Activated naive CD4-positive, alpha-beta T cell treated with anti-CD3 and anti-CD28 coated beads, Interleukin-2, amount 10 ng/mL, durations not matched to agents 7 days and 5 days (primary cell): ENCODE measurements at regions of chr2 and their contacts with region 1.

Region 1: GRCh38 chr2:196220671-196221070 is 49.3 kb upstream of the STK17B start:
- DNase-seq: no peak
- H3K4me3 Mint-ChIP-seq: no peak overlapping the region
- H3K27ac Mint-ChIP-seq: no peak overlapping the region
- H3K4me1 Mint-ChIP-seq: peaks cover 51% of the 10 kb centered on the region
- H3K27me3 Mint-ChIP-seq: no peaks in the 10 kb centered on the region

Region 2: GRCh38 chr2:196233021-196233804 is 12.5 kb after region 1 on chr2:
- CTCF ChIA-PET with region 1: interaction called, 30 read pairs
- DNase-seq: no peak
- H3K4me3 Mint-ChIP-seq: no peak overlapping the region
- H3K27ac Mint-ChIP-seq: peak overlapping the region; percentile 91
- H3K4me1 Mint-ChIP-seq: peaks cover 93% of the 10 kb centered on the region
- H3K27me3 Mint-ChIP-seq: no peaks in the 10 kb centered on the region

Region 3: DNA sequence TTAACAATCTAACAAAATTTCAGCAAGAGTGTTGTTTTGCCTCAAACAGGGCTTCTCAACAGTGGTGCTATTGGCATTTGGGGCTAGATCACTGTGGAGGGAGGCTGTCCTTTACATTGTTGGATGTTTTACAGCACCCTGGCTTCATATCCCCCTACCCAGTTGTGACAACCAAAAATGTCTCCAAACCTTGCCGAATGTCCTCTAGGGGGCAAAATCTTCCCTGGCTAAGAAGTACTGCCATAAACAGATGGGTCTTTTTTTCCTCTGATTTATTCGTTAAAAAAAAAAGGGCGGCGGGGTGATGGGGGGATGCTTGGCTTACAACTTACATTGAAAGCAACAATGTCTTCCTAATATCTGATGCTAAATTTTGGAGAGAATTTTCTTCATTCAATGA is 211.3 kb after region 1 on chr2:
- CTCF ChIA-PET with region 1: no interaction called
- DNase-seq: no peak
- H3K4me3 Mint-ChIP-seq: no peak overlapping the region
- H3K27ac Mint-ChIP-seq: no peak overlapping the region
- H3K4me1 Mint-ChIP-seq: peaks cover 6% of the 10 kb centered on the region
- H3K27me3 Mint-ChIP-seq: peaks cover 8% of the 10 kb centered on the region